Posterior vena cava (tissue), 2 donors: ENCODE measurements at regions of chr14 and their contacts with region 1.

Region 1: GRCh38 chr14:39628087-39628486 is 195.9 kb upstream of the FBXO33 start:
- DNase-seq: no peak

Region 2: DNA sequence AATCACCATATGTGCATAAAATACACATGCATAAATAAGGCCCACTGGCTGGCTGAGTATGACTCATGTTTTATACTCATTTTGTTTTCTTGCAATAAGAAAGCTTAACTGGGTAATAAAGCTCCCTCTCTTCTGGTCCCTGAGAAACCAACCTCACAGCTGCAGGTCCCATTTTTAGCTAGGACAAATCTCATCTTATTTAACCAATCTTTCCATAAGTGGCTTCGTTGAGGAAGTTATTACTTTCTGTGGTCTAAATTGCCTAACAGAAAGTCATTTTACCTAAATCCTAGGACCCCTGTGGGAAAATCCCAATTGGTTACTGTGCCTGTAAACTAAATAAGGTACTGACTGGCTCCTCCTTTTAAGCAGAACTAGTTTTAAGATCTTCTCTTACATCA is 37.0 kb after region 1 on chr14:
- intact Hi-C with region 1: no loop called
- DNase-seq: no peak

Region 3: DNA sequence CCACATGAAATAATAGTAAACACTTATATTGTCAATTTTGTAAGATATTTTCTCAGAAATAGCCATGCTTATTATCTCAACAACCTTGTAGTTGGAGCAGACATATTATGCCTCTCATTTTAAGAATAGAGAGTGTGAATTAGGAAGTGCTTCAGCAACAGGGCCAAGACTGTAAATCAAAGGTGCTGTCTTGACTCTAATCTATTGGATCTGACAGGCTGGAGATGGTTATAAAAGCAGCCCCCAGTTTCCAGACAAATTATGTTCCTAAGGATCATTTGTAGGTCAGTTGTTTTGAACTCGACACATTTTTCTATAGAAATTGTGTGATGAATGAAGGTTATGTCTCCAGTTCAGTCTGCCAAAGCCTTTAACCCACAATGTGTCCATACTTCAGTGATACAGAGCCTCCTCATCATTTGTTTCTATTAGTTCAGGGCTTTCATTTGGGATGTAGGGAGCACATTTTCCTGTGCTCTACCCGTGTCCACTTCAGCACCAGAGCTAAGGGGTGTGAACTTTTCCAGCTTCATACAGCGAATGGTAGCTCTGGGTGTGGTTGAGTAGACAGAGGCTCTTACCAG is 89.0 kb after region 1 on chr14:
- intact Hi-C with region 1: no loop called
- DNase-seq: no peak

Region 4: DNA sequence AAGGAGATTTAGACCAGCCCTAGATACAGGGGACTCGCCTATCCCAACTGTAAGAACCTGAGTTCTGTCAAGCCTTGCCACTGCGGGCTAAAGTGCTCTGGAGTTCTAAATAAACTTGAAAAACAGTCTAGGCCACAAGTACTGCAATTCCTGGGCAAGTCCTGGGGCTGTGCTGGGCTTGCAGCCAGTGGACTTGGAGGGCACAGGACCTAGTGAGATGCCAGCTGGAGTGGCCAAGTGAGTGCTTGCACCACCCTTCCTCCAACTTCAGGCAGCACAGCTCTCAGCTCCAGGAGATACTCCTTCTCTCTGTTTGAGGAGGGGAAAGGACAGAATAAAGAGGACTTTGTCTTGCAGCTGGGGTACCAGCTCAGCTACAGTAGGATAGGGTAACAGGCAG is 111.7 kb after region 1 on chr14:
- intact Hi-C with region 1: no loop called
- DNase-seq: no peak

Region 5: DNA sequence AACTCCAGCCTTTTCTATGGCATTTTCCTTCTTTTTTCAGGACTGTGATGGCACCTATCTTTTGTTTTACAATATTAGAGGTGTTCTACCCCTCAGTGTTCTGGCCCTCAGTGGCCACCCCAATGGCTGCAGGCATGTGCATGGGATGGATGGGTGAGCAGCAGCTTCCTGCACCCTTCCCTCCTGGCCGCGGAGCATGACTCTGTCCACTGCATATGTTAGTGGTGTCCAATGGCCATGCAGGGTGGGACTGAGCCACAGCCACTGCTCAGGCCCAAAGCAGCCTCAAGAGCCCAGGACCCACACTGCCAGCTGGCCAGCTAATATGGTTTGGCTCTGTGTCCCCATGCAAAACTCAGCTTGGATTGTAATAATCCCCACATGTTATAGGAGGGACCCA is 836.4 kb after region 1 on chr14:
- intact Hi-C with region 1: loop called in 1 of 2 experiments (anchors 5 kb)
- DNase-seq: no peak